IMR-90 (cell line): ENCODE measurements at regions of chr9 and their contacts with region 1.

Region 1: DNA sequence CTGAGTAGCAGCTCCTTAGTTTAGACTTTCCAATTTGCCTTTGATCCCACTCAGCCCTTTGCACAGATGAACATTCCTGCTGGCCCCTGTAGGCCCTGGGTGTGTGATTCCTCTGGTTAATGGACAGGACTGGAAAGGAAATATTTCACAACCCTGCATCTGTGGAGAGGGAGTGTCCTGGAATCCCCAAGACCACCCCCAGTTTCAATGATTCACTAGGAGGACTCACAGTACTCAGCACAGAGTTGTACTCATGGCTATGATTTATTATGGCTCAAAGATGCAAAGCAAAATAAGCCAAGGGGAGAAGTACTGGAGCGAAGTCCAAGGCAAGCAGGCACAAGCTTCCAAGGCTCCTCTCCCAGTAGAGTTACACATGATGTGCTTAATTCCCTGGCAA is 42.4 kb upstream of the TJP2 start:
- DNase-seq: peak; percentile 96
- ATAC-seq: peak; percentile 91
- H3K4me3 ChIP-seq: no peak overlapping the region
- H3K27ac ChIP-seq: peak overlapping the region; percentile 5; the same call in 1 of the 2 replicates
- H3K4me1 ChIP-seq: peaks cover 17% of the 10 kb centered on the region
- H3K27me3 ChIP-seq: no peaks in the 10 kb centered on the region
- CTCF ChIP-seq: no peak
- POLR2A ChIP-seq: no peak
- RAD21 ChIP-seq: no peak; the same call in 1 of the 2 replicates

Region 2: GRCh38 chr9:69078581-69078980 is 53.1 kb before region 1 on chr9:
- CTCF ChIA-PET with region 1: no interaction called
- POLR2A ChIA-PET with region 1: no interaction called
- dilution Hi-C with region 1: no loop called
- in situ Hi-C with region 1: no loop called
- intact Hi-C with region 1: no loop called
- DNase-seq: no peak
- ATAC-seq: peak; percentile 50
- H3K4me3 ChIP-seq: no peak overlapping the region
- H3K27ac ChIP-seq: no peak overlapping the region
- H3K4me1 ChIP-seq: peaks cover 4% of the 10 kb centered on the region; the same call in 1 of the 2 replicates
- H3K27me3 ChIP-seq: no peaks in the 10 kb centered on the region
- CTCF ChIP-seq: no peak
- POLR2A ChIP-seq: no peak
- RAD21 ChIP-seq: no peak

Region 3: DNA sequence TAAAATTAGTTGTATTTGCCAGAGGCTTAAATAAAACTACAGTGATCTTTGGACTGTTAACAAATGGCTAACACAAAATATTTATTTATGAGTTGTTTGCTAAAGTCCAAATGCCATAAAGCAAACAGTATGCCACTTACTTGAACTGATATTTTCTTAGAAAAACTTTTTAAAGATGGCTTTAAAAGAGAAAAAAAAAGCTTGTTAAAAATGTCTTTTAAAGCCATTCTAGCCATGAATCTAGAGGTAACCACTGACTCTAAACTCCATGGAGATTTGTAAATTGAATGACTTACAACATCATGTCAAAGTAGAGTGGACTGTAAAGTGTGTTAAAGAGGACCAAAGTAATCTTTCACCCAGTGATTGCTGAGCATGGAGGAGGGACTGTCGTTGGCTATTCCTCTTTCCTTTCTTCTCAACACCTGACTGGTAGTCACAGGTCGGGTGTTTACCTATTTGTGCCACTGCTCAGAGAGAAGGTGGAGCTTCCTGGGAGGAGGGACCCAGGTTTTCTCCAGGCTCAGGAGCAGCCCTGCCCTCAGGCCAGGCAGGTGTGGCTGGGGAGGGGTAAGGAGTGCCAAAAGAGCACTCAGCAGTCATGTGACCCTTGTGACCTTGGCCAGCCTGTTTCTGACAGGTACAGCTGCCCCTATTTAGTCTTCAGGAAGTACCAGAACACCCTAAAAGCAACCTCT is 26.7 kb before region 1 on chr9:
- CTCF ChIA-PET with region 1: interaction called, 10 read pairs
- POLR2A ChIA-PET with region 1: no interaction called
- dilution Hi-C with region 1: no loop called
- in situ Hi-C with region 1: no loop called
- intact Hi-C with region 1: no loop called
- DNase-seq: no peak
- ATAC-seq: no peak
- H3K4me3 ChIP-seq: no peak overlapping the region
- H3K27ac ChIP-seq: no peak overlapping the region
- H3K4me1 ChIP-seq: no peaks in the 10 kb centered on the region
- H3K27me3 ChIP-seq: no peaks in the 10 kb centered on the region
- CTCF ChIP-seq: no peak
- POLR2A ChIP-seq: no peak
- RAD21 ChIP-seq: no peak

Region 4: GRCh38 chr9:69180670-69181069 is 49.0 kb after region 1 on chr9:
- CTCF ChIA-PET with region 1: no interaction called
- POLR2A ChIA-PET with region 1: no interaction called
- dilution Hi-C with region 1: no loop called
- in situ Hi-C with region 1: no loop called
- intact Hi-C with region 1: loop called (anchors 5 kb)
- DNase-seq: peak; percentile 99
- ATAC-seq: peak; percentile 97
- H3K4me3 ChIP-seq: no peak overlapping the region
- H3K27ac ChIP-seq: no peak overlapping the region
- H3K4me1 ChIP-seq: peaks cover 16% of the 10 kb centered on the region
- H3K27me3 ChIP-seq: no peaks in the 10 kb centered on the region
- CTCF ChIP-seq: no peak
- POLR2A ChIP-seq: no peak
- RAD21 ChIP-seq: no peak